ENCODE measurements at regions of chr1 and their contacts with region 1.

Region 1: DNA sequence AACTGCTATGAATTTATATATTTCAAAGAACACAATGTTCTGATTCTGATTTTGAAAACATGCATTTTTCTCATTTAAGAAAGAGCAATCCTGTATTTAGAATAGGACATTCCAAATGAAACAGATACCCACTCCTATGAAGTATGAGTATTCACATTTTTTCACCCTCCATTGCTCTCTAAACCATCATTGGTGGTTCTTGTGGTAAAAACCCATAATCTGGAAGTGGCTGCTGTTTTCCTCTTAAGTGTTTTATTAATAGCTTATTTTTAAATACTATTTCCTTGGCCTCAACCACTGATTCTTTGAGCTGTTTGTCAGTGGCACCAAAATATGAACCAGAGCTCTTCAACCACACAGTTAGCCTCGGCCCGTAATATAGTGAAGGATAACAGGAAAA is 60.0 kb upstream of the ADAM30 start:
- DNase-seq: no peak
- H3K4me3 ChIP-seq: no peak overlapping the region
- H3K27ac ChIP-seq: no peak overlapping the region
- H3K27me3 ChIP-seq: no peaks in the 10 kb centered on the region
- CTCF ChIP-seq: no peak

Region 2: DNA sequence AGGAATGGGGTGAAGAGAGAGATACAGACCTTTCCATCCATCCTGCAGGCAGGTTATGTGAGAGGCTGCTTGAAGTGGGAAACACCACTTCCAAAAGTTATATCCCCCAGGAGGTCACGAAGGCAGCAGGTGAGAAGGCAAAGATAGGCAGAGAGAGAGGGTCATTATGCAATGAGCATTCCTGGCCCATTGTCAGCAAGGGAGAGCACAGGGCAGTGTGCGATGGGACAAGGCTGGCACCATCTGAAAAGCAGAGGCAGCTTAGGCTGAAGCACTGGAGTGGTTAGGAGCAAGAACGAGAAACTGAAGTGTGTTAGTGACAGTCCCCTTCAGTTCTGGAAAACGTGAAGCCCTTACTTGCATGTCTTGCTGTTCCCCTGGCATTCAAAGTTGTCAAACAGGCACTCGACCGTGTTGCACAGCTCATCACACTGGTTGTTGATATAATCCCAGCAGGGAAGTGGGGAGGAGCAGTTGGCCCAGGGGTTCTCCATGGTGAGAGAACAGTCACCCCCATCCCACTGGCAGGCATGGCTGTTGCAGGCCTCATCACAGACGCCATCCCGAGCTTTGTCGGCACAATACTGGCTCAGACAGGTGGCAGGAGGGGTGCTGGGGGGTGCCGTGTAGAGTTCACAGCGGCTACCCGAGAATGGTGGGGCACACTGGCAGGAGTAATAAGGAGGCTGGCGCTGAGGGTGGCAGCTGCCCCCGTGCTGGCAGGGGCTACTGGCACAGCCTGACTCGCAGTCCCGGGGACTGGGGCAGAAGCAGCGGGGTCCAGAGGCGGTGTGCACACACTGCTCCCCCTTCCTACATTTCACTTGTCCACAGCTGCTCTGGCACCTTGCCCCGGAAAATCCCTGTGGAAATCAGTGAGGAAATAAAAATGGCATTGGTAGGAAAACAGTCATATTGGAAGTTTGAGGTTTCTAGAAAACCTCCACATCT is 31.1 kb before region 1 on chr1:
- CTCF ChIA-PET with region 1: no interaction called
- POLR2A ChIA-PET with region 1: no interaction called
- DNase-seq: no peak
- H3K4me3 ChIP-seq: no peak overlapping the region
- H3K27ac ChIP-seq: no peak overlapping the region
- H3K27me3 ChIP-seq: no peaks in the 10 kb centered on the region
- CTCF ChIP-seq: no peak

Region 3: GRCh38 chr1:119968068-119968492 is 11.8 kb after region 1 on chr1:
- CTCF ChIA-PET with region 1: interaction called, 12 read pairs
- POLR2A ChIA-PET with region 1: no interaction called
- DNase-seq: no peak
- H3K4me3 ChIP-seq: no peak overlapping the region
- H3K27ac ChIP-seq: no peak overlapping the region
- H3K27me3 ChIP-seq: no peaks in the 10 kb centered on the region
- CTCF ChIP-seq: peak; percentile 64

Measured in AG04450 (cell line).